ENCODE measurements at regions of chr13 and their contacts with region 1.

Region 1: DNA sequence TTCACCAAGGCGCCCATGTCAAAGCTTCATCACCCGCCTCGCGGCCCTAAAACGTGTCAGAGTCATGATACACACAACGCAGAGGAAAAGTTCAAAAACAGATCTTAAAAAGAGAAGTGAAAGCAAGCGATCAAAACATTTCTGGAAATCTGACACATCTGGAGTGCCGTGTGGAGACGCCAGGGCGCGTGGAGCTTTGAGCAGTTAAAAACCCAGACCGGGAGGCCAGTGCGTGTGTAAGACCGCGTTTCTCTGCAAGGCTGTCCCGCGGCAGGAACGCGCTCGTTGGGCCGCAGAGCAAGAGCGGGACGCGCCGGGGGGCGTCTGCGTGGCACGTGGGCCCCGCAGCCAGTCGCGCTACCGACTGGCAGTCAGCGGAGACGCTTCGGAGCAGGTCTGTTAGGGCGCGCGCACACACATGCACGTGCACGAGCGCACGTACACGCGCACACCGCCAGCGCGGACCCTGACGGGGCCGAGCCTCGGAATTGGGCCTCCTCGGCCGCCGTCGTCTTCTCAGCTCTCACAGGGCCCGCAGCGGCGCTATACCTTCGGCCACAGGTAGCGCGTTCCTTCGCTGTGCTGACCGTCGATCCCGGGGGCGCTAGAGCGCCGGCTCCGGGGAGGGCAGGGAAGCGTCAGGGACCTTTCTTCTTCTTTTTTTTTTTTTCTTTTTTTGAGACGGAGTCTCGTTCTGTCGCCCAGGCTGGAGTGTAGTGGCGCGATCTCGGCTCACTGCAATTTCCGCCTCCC is 35.8 kb downstream of the RNF6 start:
- DNase-seq: peak; percentile 93
- ATAC-seq: peak; percentile 93
- H3K4me3 Mint-ChIP-seq: peak overlapping the region; percentile 82
- H3K27ac Mint-ChIP-seq: peak overlapping the region; percentile 86
- H3K4me1 Mint-ChIP-seq: peaks cover 27% of the 10 kb centered on the region
- H3K27me3 Mint-ChIP-seq: no peaks in the 10 kb centered on the region

Region 2: DNA sequence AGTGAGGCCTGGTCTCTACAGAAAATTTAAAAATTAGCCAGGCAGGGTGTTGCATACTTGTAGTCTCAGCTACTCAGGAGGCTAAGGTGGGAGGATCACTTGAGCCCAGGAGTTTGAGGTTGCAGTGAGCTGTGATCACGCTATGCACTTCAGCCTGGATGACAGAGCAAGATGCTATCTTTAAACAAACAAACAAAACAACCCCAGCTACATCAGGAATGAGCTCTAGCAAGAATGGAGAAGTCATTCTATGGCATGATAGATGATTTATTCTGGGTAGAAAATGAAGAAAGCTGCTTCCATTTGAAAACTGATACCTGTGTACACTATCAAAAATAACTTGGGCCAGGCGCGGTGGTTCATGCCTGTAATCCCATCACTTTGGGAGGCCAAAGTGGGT is 118.7 kb before region 1 on chr13:
- CTCF ChIA-PET with region 1: no interaction called
- DNase-seq: no peak
- ATAC-seq: no peak
- H3K4me3 Mint-ChIP-seq: no peak overlapping the region
- H3K27ac Mint-ChIP-seq: no peak overlapping the region
- H3K4me1 Mint-ChIP-seq: no peaks in the 10 kb centered on the region
- H3K27me3 Mint-ChIP-seq: peaks cover 19% of the 10 kb centered on the region

Region 3: GRCh38 chr13:26216042-26216441 is 29.7 kb after region 1 on chr13:
- CTCF ChIA-PET with region 1: interaction called, 33 read pairs
- DNase-seq: no peak
- ATAC-seq: no peak
- H3K4me3 Mint-ChIP-seq: no peak overlapping the region
- H3K27ac Mint-ChIP-seq: no peak overlapping the region
- H3K4me1 Mint-ChIP-seq: peaks cover 27% of the 10 kb centered on the region
- H3K27me3 Mint-ChIP-seq: no peaks in the 10 kb centered on the region

Region 4: GRCh38 chr13:26221721-26222519 is 35.6 kb after region 1 on chr13 and contains the start of gene RNF6:
- CTCF ChIA-PET with region 1: interaction called, 33 read pairs
- DNase-seq: peak; percentile 94
- ATAC-seq: peak; percentile 98
- H3K4me3 Mint-ChIP-seq: peak within 1 kb of the TSS; percentile 100
- H3K27ac Mint-ChIP-seq: peak within 1 kb of the TSS; percentile 99
- H3K4me1 Mint-ChIP-seq: peaks cover 36% of the 10 kb centered on the region
- H3K27me3 Mint-ChIP-seq: peaks cover 4% of the 10 kb centered on the region
- total RNA-seq, gene RNF6: 34.2 to 47.6 TPM

Region 5: DNA sequence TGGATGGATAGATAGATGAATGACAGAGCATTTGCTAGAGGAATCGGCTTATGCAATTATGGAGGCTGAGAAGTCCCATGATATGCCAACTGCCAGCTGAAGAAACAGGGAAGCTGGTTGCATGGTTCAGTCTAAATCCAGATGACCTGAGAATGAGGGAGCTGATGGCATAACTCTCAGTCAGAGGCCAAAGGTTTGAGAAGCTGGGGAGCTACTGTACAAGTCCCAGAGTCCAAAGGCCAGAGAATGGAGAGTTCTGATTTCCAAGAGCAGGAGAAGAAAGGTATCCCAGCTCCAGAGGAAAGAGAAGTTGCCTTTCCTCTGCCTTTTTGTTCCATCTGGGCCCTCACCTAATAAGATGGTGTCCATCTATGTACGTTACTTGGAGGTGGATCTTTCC is 176.0 kb after region 1 on chr13:
- CTCF ChIA-PET with region 1: no interaction called
- DNase-seq: no peak
- ATAC-seq: no peak
- H3K4me3 Mint-ChIP-seq: no peak overlapping the region
- H3K27ac Mint-ChIP-seq: no peak overlapping the region
- H3K4me1 Mint-ChIP-seq: no peaks in the 10 kb centered on the region
- H3K27me3 Mint-ChIP-seq: no peaks in the 10 kb centered on the region

Region 6: DNA sequence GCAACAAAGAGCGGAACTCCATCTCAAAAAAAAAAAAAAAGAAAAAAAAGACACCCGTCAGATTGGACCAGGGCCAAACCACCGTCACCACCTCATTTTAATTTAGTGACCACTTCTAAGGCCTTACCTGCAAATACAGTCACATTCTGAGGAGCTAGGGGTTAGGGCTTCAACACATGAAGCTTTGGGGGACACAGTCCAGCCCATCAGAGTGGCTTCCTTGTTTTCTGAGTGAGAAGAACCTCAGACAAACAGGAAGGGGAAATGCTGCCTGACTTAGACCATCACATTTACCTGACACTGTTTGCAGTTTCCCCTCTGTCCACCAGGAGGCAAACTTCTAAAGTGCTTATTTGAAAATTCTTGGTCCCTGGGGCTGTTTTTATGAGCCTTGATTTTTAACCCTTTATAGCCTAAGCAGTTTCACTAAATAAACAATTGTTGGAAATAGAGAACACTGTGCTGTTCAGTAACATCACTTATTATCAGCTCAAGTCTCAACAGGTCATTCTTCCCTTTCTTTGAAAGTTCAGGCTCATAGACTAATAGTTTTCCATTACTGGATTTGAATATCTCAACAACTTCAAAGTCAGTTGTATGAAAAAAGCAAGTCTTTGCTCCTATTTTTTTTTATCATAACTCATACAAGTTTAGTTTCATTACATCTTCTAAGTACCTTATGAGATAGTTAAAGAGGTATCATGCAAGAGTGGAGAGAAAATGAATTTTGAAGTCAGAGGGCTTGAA is 296.3 kb after region 1 on chr13:
- CTCF ChIA-PET with region 1: interaction called, 39 read pairs
- DNase-seq: peak; percentile 76
- ATAC-seq: peak; percentile 80
- H3K4me3 Mint-ChIP-seq: no peak overlapping the region
- H3K27ac Mint-ChIP-seq: peak overlapping the region; percentile 43
- H3K4me1 Mint-ChIP-seq: peaks cover 8% of the 10 kb centered on the region
- H3K27me3 Mint-ChIP-seq: no peaks in the 10 kb centered on the region

Region 7: GRCh38 chr13:26498656-26499591 is 312.6 kb after region 1 on chr13:
- CTCF ChIA-PET with region 1: interaction called, 118 read pairs
- DNase-seq: no peak
- ATAC-seq: no peak
- H3K4me3 Mint-ChIP-seq: no peak overlapping the region
- H3K27ac Mint-ChIP-seq: no peak overlapping the region
- H3K4me1 Mint-ChIP-seq: peaks cover 3% of the 10 kb centered on the region
- H3K27me3 Mint-ChIP-seq: peaks cover 16% of the 10 kb centered on the region

Region 8: GRCh38 chr13:26605845-26606244 is 419.6 kb after region 1 on chr13:
- CTCF ChIA-PET with region 1: no interaction called
- DNase-seq: no peak
- ATAC-seq: no peak
- H3K4me3 Mint-ChIP-seq: no peak overlapping the region
- H3K27ac Mint-ChIP-seq: no peak overlapping the region
- H3K4me1 Mint-ChIP-seq: peaks cover 14% of the 10 kb centered on the region
- H3K27me3 Mint-ChIP-seq: peaks cover 44% of the 10 kb centered on the region

Region 9: GRCh38 chr13:26698392-26699196 is 512.3 kb after region 1 on chr13:
- CTCF ChIA-PET with region 1: interaction called, 95 read pairs
- DNase-seq: peak; percentile 80
- ATAC-seq: peak; percentile 80
- H3K4me3 Mint-ChIP-seq: no peak overlapping the region
- H3K27ac Mint-ChIP-seq: no peak overlapping the region
- H3K4me1 Mint-ChIP-seq: no peaks in the 10 kb centered on the region
- H3K27me3 Mint-ChIP-seq: peaks cover 14% of the 10 kb centered on the region